ENCODE measurements at regions of chr20 and their contacts with region 1.

Region 1: GRCh38 chr20:8234580-8234979 is 102.5 kb downstream of the PLCB1 start:
- DNase-seq: no peak
- H3K4me3 ChIP-seq: no peak overlapping the region
- H3K27ac ChIP-seq: no peak overlapping the region
- H3K27me3 ChIP-seq: no peaks in the 10 kb centered on the region
- CTCF ChIP-seq: no peak

Region 2: DNA sequence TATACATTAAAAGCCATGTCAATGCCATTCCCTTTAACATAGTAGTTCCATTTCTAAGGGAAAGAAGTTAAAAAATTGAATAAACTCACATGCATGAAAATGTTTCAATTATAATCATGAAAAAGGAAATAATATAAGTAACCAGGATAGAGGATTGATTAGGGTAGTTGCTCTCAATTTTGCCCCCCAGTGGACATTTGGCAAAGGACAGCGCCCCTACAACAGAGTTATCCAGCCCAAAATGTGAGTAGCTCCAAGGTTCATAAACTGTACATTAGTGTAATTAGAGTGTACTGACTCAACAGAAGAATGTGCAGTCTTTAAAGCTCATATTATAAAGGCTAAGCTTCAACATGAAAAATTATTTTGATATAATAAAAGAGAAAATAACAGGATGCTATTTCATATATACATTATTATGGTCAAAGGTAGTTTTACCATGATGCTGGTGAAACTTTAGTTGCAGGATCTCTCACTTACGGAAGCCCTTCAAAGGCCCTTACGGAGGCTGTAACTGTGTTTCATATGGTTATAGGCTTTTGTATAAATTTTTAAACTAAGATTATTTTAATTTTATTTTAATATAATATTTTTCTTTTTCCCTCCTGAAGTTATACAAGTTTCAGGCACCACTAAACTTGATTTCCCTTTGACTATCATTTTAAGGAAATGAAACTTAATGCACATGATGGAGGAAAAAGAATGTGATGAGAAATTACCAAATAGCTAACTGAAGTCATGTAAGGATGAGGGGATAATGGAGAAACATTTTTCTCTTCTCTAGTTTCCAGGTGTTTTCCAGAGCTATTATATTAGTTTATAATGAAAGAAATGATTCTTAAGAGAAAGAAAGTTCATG is 301.1 kb after region 1 on chr20:
- CTCF ChIA-PET with region 1: interaction called, 10 read pairs
- POLR2A ChIA-PET with region 1: no interaction called
- DNase-seq: no peak
- H3K4me3 ChIP-seq: no peak overlapping the region
- H3K27ac ChIP-seq: no peak overlapping the region
- H3K27me3 ChIP-seq: no peaks in the 10 kb centered on the region
- CTCF ChIP-seq: peak; percentile 70

Measured in AG04450 (cell line).